Mucosa of descending colon (tissue), 3 donors: ENCODE measurements at regions of chr1 and their contacts with region 1.

Region 1: DNA sequence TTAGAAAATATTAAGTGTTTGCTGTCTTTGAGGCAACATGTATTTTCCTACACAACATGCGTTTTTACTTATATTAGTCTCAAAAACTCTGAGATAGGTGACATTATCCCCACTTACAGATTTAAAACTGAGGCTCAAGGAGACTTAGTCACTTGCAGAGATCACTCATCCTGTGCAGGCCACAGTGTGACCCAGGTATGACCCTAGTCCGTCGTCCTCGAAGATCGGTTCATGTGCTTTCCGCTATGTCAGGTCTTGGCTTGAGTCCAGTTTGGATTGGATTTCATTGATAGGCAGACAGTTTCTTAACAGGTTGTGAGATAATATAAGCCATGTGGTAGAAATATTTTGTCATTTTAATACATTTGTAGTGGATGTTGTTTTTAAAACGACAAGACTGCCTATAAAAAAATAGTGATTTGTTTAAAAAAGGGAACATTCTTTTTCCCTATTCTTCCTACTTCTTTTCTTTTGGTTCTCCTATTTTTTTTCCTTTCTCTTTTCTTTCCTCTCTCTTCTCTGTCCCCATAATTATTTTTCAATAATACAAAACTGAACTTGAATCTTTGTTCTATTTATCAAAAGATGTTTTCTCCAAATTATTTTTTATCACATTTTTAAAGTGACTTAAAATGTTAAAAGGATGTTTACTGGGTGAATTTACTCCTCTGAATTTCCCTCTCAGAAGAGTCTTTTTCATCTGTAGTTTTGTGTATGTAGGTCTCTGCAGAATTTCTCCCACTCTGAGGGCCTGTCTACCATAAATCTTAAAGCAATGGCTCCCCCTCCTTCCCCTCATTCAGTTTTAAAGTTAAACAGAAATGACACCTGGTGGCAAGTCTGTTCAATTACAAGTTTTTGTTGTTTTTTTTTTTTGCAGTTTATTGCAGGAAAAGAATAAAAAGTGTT is 81.8 kb downstream of the PHTF1 start:
- DNase-seq: peak in 1 of 3 donors; percentile 21
- ATAC-seq: peak; percentile 31
- H3K4me3 ChIP-seq: no peak overlapping the region
- H3K4me1 ChIP-seq: no peaks in the 10 kb centered on the region
- CTCF ChIP-seq: peak; percentile 8

Region 2: DNA sequence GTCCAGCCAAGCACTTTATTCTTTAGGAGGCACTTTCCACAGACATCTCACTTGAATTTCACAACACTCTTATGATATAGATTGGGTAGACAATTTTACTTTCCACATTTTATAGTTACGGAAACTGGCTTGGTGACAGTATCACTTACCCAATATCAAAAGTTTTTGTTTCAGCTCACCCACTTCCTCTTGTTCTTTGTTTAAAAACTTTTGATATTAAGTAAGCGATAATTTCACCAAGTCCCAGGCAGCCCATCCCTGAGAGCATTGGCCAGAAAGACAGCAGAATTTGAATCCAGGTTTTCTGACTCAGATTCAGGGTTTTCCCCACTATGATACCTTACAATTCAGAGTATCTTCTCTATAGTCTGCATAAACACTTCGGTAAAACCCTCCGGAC is 544.5 kb before region 1 on chr1:
- intact Hi-C with region 1: loop called in 1 of 2 experiments (anchors 10 kb)
- DNase-seq: no peak
- ATAC-seq: no peak
- H3K4me3 ChIP-seq: no peak overlapping the region
- H3K4me1 ChIP-seq: no peaks in the 10 kb centered on the region
- CTCF ChIP-seq: no peak

Region 3: DNA sequence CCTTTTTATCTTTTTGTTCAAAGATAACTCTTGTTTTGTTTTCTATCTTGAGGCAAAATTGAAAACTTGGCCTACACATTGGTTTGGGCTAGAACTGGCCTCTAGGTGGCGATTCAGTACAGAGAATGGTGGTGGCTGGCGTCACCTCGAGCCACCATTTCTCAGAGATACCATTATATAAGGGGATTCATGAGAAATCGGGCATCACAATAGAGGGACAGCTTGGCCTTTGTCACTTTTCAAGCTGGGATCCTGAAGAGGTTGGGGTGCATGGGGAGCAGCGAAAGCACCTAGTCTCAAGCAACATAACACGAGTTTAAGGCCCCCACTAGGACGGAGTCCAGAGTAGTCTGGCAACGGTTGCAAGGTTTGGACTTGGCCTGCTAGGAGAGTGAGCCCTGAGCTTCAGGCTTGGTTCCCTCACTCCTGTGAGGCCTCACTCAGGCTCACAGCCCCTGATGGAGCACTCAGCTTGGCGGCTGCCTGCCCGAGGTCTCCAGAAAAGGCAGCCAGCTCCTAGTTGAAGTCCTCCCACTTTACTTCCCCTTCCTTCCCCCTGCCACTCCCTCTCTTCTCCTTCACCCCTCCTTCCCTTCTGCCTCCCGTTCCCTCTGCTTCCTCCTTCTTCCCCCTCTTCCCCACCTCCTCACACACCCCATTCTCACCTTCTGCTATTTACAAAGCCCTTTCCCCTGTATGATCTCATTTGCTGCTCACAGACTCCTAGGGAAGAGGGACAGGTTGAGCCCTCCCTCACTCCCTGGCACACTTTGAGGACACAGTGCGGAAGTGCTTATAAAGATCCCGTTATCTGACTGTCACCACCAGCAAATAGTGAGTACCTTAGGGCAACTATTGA is 536.7 kb before region 1 on chr1:
- intact Hi-C with region 1: loop called (anchors 10 kb)
- DNase-seq: peak in 2 of 3 donors; percentile 61 to 89
- ATAC-seq: peak; percentile 91
- H3K4me3 ChIP-seq: no peak overlapping the region
- H3K4me1 ChIP-seq: peaks cover 3% of the 10 kb centered on the region
- CTCF ChIP-seq: peak; percentile 54

Region 4: DNA sequence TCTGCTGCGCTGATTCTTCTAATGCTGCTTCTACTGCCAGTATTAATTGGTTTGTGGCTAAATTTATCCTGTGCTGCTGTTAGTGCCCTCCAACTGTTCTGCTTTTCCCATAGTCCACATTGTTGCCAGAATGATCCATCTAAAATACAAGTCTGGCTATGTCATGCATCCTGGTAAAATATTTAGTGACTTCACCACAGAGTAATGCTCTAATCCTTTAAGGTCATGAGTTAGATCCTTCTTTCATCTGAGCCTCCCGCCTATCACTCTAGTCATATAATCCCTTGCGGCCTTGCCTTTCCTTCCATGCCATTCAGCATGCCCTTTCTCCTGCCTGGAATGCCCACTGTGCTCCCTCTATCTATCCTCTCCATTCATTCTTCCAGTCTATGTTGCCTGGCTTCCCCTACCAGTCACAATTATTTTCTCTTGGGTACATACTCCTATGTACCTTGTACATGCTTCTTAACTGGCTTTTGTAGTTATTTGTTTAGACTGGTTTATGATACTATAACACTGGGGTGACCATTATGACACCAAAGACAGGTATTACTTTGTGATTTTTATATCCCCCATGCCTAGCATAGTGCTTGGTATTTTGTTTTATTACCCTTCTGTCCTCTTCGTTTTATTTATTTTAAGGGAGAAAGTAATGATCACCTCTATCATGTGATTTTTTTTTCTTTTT is 143.2 kb before region 1 on chr1:
- intact Hi-C with region 1: no loop called
- DNase-seq: no peak
- ATAC-seq: peak; percentile 90
- H3K4me3 ChIP-seq: no peak overlapping the region
- H3K4me1 ChIP-seq: peaks cover 10% of the 10 kb centered on the region
- CTCF ChIP-seq: no peak